GM13977 (cell line): ENCODE measurements at regions of chr12 and their contacts with region 1.

Region 1: GRCh38 chr12:3885277-3886094 is 12.3 kb upstream of the PARP11 start:
- DNase-seq: peak; percentile 29
- CTCF ChIP-seq: peak; percentile 74

Region 2: GRCh38 chr12:3187846-3188770 is 697.4 kb before region 1 on chr12:
- in situ Hi-C with region 1: no loop called
- DNase-seq: no peak
- CTCF ChIP-seq: no peak

Region 3: DNA sequence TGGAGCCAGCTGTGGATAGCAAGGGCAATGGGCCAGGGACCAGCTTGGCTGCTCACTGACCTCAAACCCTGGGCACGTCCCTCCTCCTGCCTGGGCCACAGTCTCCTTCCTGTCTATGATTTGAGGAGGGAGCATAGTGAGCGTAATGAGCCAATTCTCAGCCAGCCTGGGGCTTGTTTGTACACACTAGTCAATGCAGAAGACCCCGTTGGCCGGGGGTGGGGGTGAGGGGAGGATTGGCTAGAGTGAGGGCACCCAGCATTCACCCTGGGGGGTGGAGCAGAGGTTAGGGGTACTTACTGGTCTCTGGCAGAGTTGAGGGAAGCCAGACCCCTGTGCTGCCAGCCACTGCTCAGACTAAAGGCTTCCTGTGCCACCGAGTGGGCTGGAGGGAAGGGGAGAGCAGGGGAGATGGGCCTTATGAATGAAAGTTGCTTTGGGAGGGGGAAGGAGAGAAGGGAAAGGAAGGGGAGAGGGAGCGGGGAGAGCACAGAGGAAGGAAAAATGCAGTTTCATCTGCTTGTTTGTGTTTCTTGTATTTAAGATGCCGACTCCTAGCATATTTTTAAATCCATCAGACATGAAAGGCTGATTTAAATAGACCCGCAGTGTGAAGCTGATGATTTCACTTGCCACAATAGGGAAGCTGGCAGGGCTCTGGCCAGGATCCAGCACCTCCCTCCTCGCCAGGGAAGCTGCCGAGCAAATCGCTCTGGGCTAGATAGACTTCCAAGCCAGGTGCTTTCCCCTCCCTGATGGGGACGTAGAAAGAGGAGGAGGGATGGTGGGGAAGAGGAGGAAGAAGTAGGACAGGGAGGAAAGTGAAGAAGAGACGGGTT is 280.5 kb before region 1 on chr12:
- in situ Hi-C with region 1: no loop called
- DNase-seq: no peak
- CTCF ChIP-seq: no peak

Region 4: GRCh38 chr12:4056910-4057845 is 171.7 kb after region 1 on chr12:
- in situ Hi-C with region 1: no loop called
- DNase-seq: no peak
- CTCF ChIP-seq: no peak

Region 5: DNA sequence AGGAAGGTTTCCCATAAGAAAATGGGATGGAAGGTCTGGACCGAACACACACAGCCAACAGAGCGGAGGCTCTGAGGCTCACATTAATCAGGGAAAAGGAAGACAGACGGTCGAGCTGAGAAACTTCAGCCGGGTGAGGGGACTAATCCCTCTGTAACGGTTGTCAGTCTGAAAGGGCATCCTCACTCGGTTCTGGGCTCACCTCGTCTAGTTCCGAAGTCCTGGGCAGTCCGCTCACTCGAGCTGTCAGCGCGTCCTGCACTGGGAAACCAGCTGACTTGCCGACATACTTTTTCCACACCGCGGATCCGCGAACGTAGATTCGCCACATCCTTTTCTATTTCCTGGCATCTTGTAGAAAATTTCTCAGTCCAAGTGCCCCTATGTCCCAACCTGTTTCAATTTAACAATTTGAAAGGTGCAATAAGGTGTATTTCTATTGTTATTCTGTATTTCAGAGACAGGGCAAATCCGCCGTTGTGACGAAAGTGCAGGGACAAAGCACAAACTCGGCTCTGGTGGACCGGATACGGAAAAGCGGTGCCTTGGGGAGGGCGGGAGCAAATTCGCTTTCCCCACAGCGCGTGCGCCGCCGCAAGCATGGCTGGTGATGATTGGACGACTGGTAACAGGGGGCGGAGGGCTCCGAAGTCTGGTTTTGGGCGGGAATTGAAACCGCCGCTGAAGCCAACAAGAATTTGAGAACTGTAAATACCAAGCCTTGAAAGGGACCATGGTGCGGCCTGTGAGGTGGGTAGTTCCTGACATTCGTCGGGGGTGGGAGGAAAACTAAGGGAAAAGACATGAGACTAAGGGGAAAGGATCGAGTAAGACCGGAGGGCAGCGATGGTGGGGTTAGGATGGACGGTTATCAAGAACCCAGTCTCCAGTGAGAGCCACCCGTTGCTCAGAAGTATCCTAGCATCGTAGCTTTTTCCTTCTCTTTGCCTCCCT is 653.0 kb after region 1 on chr12 and contains the start of gene RAD51AP1:
- in situ Hi-C with region 1: loop called (anchors 25 kb)
- DNase-seq: peak; percentile 83
- CTCF ChIP-seq: no peak